CD4-positive, alpha-beta T cell (primary cell): ENCODE measurements at regions of chrX and their contacts with region 1.

Region 1: GRCh38 chrX:107627838-107628661 is at the start of gene PRPS1:
- DNase-seq: peak; percentile 72 to 96 (median 82)
- ATAC-seq: peak; percentile 96
- H3K4me3 ChIP-seq: peak within 1 kb of the TSS; percentile 85
- H3K4me3 Mint-ChIP-seq: peak within 1 kb of the TSS; percentile 97
- H3K27ac ChIP-seq: peak within 1 kb of the TSS; percentile 70 to 83
- H3K27ac Mint-ChIP-seq: peak within 1 kb of the TSS; percentile 89
- H3K4me1 ChIP-seq: peaks cover 8% of the 10 kb centered on the region
- H3K4me1 Mint-ChIP-seq: peaks cover 46% of the 10 kb centered on the region
- H3K27me3 ChIP-seq: no peaks in the 10 kb centered on the region
- H3K27me3 Mint-ChIP-seq: no peaks in the 10 kb centered on the region
- CTCF ChIP-seq: no peak
- total RNA-seq, gene PRPS1: 66.5 to 70.4 TPM

Region 2: GRCh38 chrX:106481341-106481740 is 1146.7 kb before region 1 on chrX:
- CTCF ChIA-PET with region 1: no interaction called
- POLR2A ChIA-PET with region 1: no interaction called
- intact Hi-C with region 1: no loop called
- DNase-seq: peak in 10 of 14 experiments; percentile 1 to 68 (median 8)
- ATAC-seq: no peak
- H3K4me3 ChIP-seq: no peak overlapping the region
- H3K4me3 Mint-ChIP-seq: no peak overlapping the region
- H3K27ac ChIP-seq: no peak overlapping the region
- H3K27ac Mint-ChIP-seq: no peak overlapping the region
- H3K4me1 ChIP-seq: peaks cover 3% of the 10 kb centered on the region
- H3K4me1 Mint-ChIP-seq: peaks cover 20% of the 10 kb centered on the region
- H3K27me3 ChIP-seq: no peaks in the 10 kb centered on the region
- H3K27me3 Mint-ChIP-seq: no peaks in the 10 kb centered on the region
- CTCF ChIP-seq: peak; percentile 69

Region 3: DNA sequence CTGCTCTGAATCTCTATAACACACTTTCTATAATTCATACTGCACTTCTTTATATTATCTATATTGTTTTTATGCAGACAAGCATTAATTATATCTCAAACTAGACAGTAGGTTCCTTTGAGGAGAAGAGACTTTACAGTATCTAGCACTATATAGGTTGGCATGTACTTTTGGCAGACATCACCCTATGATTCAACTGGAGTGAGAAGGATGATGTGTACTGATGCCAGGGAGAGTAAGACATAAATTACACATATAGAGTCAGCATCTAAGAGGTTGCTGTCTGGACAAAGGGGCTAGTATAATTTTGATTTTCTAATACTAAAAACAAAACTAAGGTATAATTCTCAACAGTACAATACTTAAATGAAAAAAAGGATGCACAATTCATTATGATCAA is 504.3 kb before region 1 on chrX:
- CTCF ChIA-PET with region 1: no interaction called
- POLR2A ChIA-PET with region 1: no interaction called
- intact Hi-C with region 1: loop called in 1 of 2 experiments (anchors 10 kb)
- DNase-seq: no peak
- ATAC-seq: no peak
- H3K4me3 ChIP-seq: no peak overlapping the region
- H3K4me3 Mint-ChIP-seq: no peak overlapping the region
- H3K27ac ChIP-seq: no peak overlapping the region
- H3K27ac Mint-ChIP-seq: no peak overlapping the region
- H3K4me1 ChIP-seq: no peaks in the 10 kb centered on the region
- H3K4me1 Mint-ChIP-seq: peaks cover 6% of the 10 kb centered on the region
- H3K27me3 ChIP-seq: no peaks in the 10 kb centered on the region
- H3K27me3 Mint-ChIP-seq: no peaks in the 10 kb centered on the region
- CTCF ChIP-seq: no peak

Region 4: GRCh38 chrX:107485013-107485412 is 143.0 kb before region 1 on chrX:
- CTCF ChIA-PET with region 1: no interaction called
- POLR2A ChIA-PET with region 1: no interaction called
- intact Hi-C with region 1: no loop called
- DNase-seq: no peak
- ATAC-seq: no peak
- H3K4me3 ChIP-seq: no peak overlapping the region
- H3K4me3 Mint-ChIP-seq: no peak overlapping the region
- H3K27ac ChIP-seq: no peak overlapping the region
- H3K27ac Mint-ChIP-seq: no peak overlapping the region
- H3K4me1 ChIP-seq: no peaks in the 10 kb centered on the region
- H3K4me1 Mint-ChIP-seq: no peaks in the 10 kb centered on the region
- H3K27me3 ChIP-seq: no peaks in the 10 kb centered on the region
- H3K27me3 Mint-ChIP-seq: no peaks in the 10 kb centered on the region
- CTCF ChIP-seq: no peak

Region 5: GRCh38 chrX:107654872-107655761 is 27.1 kb after region 1 on chrX:
- CTCF ChIA-PET with region 1: interaction called, 5 read pairs
- POLR2A ChIA-PET with region 1: interaction called, 11 read pairs
- intact Hi-C with region 1: no loop called
- DNase-seq: peak; percentile 49 to 81 (median 64)
- ATAC-seq: peak; percentile 92
- H3K4me3 ChIP-seq: no peak overlapping the region
- H3K4me3 Mint-ChIP-seq: no peak overlapping the region
- H3K27ac ChIP-seq: no peak overlapping the region
- H3K27ac Mint-ChIP-seq: peak overlapping the region; percentile 13
- H3K4me1 ChIP-seq: peaks cover 12% of the 10 kb centered on the region
- H3K4me1 Mint-ChIP-seq: peaks cover 29% of the 10 kb centered on the region
- H3K27me3 ChIP-seq: no peaks in the 10 kb centered on the region
- H3K27me3 Mint-ChIP-seq: no peaks in the 10 kb centered on the region
- CTCF ChIP-seq: peak; percentile 72

Region 6: GRCh38 chrX:107716816-107717700 is 89.0 kb after region 1 on chrX:
- CTCF ChIA-PET with region 1: interaction called, 3 read pairs
- POLR2A ChIA-PET with region 1: interaction called, 28 read pairs
- intact Hi-C with region 1: loop called in 1 of 2 experiments (anchors 1 kb)
- DNase-seq: peak; percentile 83 to 96 (median 87)
- ATAC-seq: peak; percentile 54
- H3K4me3 ChIP-seq: peak overlapping the region; percentile 98
- H3K4me3 Mint-ChIP-seq: peak overlapping the region; percentile 97
- H3K27ac ChIP-seq: peak overlapping the region; percentile 91 to 99
- H3K27ac Mint-ChIP-seq: peak overlapping the region; percentile 99
- H3K4me1 ChIP-seq: peaks cover 52% of the 10 kb centered on the region
- H3K4me1 Mint-ChIP-seq: peaks cover 50% of the 10 kb centered on the region
- H3K27me3 ChIP-seq: no peaks in the 10 kb centered on the region
- H3K27me3 Mint-ChIP-seq: peaks cover 4% of the 10 kb centered on the region
- CTCF ChIP-seq: no peak

Region 7: GRCh38 chrX:107731831-107732502 is 103.9 kb after region 1 on chrX:
- CTCF ChIA-PET with region 1: no interaction called
- POLR2A ChIA-PET with region 1: no interaction called
- intact Hi-C with region 1: no loop called
- DNase-seq: peak in 2 of 14 experiments; percentile 20 to 37
- ATAC-seq: no peak
- H3K4me3 ChIP-seq: no peak overlapping the region
- H3K4me3 Mint-ChIP-seq: no peak overlapping the region
- H3K27ac ChIP-seq: no peak overlapping the region
- H3K27ac Mint-ChIP-seq: no peak overlapping the region
- H3K4me1 ChIP-seq: peaks cover 4% of the 10 kb centered on the region
- H3K4me1 Mint-ChIP-seq: no peaks in the 10 kb centered on the region
- H3K27me3 ChIP-seq: no peaks in the 10 kb centered on the region
- H3K27me3 Mint-ChIP-seq: no peaks in the 10 kb centered on the region
- CTCF ChIP-seq: no peak

Region 8: GRCh38 chrX:107826238-107827029 is 198.4 kb after region 1 on chrX:
- CTCF ChIA-PET with region 1: no interaction called
- POLR2A ChIA-PET with region 1: interaction called, 17 read pairs
- intact Hi-C with region 1: no loop called
- DNase-seq: peak in 13 of 14 experiments; percentile 1 to 72 (median 33)
- ATAC-seq: peak; percentile 49
- H3K4me3 ChIP-seq: peak overlapping the region; percentile 62
- H3K4me3 Mint-ChIP-seq: peak overlapping the region; percentile 93
- H3K27ac ChIP-seq: peak overlapping the region in 1 of 2 donors; percentile 50
- H3K27ac Mint-ChIP-seq: peak overlapping the region; percentile 90
- H3K4me1 ChIP-seq: peaks cover 20% of the 10 kb centered on the region
- H3K4me1 Mint-ChIP-seq: peaks cover 58% of the 10 kb centered on the region
- H3K27me3 ChIP-seq: no peaks in the 10 kb centered on the region
- H3K27me3 Mint-ChIP-seq: peaks cover 5% of the 10 kb centered on the region
- CTCF ChIP-seq: no peak

Region 9: DNA sequence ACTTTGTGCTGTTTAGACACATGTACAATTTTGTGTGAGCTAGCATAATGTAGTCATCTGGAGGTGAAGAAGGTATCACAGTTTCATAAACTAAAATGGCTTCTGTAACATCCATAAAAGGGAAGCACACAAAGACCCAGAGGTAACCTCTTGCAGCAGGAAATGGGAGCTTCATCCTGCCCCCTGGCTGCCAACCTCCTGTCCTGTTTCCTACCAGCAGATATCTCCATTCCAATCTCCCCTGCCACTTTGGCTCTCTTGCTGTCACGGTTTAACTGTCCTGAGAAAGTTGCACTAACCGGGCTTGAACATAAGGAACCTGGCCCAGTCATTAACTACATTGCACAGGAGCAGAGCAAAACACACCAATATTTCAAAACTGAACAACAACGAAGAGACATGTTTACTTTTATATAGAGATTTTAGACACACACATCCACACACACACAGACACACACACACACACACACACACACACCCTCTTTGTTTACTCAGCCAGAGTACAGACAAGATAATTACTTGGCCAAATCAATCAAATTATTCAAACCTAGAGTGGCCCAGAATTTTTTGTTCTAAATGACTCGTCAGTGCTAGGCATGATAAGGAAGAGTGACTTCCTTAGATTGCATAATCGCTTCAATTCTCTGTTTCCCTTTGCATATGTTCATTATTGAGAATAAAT is 221.8 kb after region 1 on chrX:
- CTCF ChIA-PET with region 1: no interaction called
- POLR2A ChIA-PET with region 1: no interaction called
- intact Hi-C with region 1: no loop called
- DNase-seq: peak in 3 of 14 experiments; percentile 1 to 9 (median 6)
- ATAC-seq: no peak
- H3K4me3 ChIP-seq: no peak overlapping the region
- H3K4me3 Mint-ChIP-seq: no peak overlapping the region
- H3K27ac ChIP-seq: no peak overlapping the region
- H3K27ac Mint-ChIP-seq: no peak overlapping the region
- H3K4me1 ChIP-seq: no peaks in the 10 kb centered on the region
- H3K4me1 Mint-ChIP-seq: peaks cover 10% of the 10 kb centered on the region
- H3K27me3 ChIP-seq: no peaks in the 10 kb centered on the region
- H3K27me3 Mint-ChIP-seq: no peaks in the 10 kb centered on the region
- CTCF ChIP-seq: no peak